ENCODE measurements at regions of chr14 and their contacts with region 1.

Region 1: GRCh38 chr14:32087173-32087861 is 10.2 kb downstream of the ARHGAP5 start:
- DNase-seq: no peak
- ATAC-seq: no peak
- H3K4me3 ChIP-seq: no peak overlapping the region
- H3K4me3 Mint-ChIP-seq: no peak overlapping the region
- H3K27ac ChIP-seq: no peak overlapping the region
- H3K27ac Mint-ChIP-seq: no peak overlapping the region
- H3K4me1 ChIP-seq: peaks cover 0 to 4% of the 10 kb centered on the region in 2 donors
- H3K4me1 Mint-ChIP-seq: peaks cover 9 to 65% (median 40%) of the 10 kb centered on the region in 7 donors
- H3K27me3 ChIP-seq: no peaks in the 10 kb centered on the region
- H3K27me3 Mint-ChIP-seq: no peaks in the 10 kb centered on the region

Region 2: GRCh38 chr14:31819304-31819703 is 268.0 kb before region 1 on chr14:
- CTCF ChIA-PET with region 1: no interaction called
- POLR2A ChIA-PET with region 1: no interaction called
- intact Hi-C with region 1: no loop called
- DNase-seq: no peak
- ATAC-seq: no peak
- H3K4me3 ChIP-seq: no peak overlapping the region
- H3K4me3 Mint-ChIP-seq: no peak overlapping the region
- H3K27ac ChIP-seq: no peak overlapping the region
- H3K27ac Mint-ChIP-seq: no peak overlapping the region
- H3K4me1 ChIP-seq: no peaks in the 10 kb centered on the region
- H3K4me1 Mint-ChIP-seq: no peaks in the 10 kb centered on the region
- H3K27me3 ChIP-seq: no peaks in the 10 kb centered on the region
- H3K27me3 Mint-ChIP-seq: no peaks in the 10 kb centered on the region

Region 3: DNA sequence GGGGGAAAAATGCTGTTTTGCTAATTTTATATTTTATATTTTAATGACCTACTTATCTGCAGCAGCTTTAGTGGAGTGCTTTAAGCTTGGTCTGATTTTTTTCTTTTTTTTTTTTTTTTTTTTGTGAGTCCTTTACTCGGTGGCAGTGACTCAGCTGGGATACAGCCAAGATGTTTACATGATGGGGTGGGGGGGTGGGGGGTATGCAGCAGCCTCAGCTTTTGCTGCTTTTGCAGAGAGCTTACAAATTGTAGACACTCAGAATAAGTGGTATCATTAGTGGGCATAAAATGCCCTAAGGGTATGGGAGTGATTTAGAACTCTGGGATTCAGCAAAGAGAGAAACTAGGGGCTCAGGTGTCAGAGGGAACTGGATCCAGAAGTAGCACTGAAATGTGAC is 48.4 kb before region 1 on chr14:
- CTCF ChIA-PET with region 1: no interaction called
- POLR2A ChIA-PET with region 1: no interaction called
- intact Hi-C with region 1: no loop called
- DNase-seq: no peak
- ATAC-seq: no peak
- H3K4me3 ChIP-seq: no peak overlapping the region
- H3K4me3 Mint-ChIP-seq: no peak overlapping the region
- H3K27ac ChIP-seq: no peak overlapping the region
- H3K27ac Mint-ChIP-seq: no peak overlapping the region
- H3K4me1 ChIP-seq: no peaks in the 10 kb centered on the region
- H3K4me1 Mint-ChIP-seq: peaks cover 0 to 5% (median 0%) of the 10 kb centered on the region in 7 donors
- H3K27me3 ChIP-seq: no peaks in the 10 kb centered on the region
- H3K27me3 Mint-ChIP-seq: peaks cover 5 to 19% (median 11%) of the 10 kb centered on the region in 5 donors

Region 4: DNA sequence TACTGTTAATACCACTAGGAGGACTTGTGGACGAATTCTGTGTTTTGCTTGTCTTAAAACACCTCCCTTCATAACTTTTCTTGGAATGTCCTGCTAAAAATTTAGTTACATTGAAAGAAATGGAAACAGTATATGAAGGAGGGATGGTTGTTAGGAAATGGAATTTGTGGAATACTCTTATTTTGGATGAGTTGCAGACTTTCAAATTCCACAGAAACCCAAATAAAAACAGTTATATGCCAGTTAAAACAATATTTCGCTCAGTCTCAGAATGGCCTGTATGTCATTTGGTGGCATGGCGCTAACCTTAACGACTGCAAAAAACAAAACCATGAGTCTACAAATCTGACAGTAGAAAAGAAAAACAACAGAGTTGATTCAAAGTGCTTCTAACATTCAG is 22.4 kb before region 1 on chr14:
- CTCF ChIA-PET with region 1: no interaction called
- POLR2A ChIA-PET with region 1: no interaction called
- intact Hi-C with region 1: no loop called
- DNase-seq: no peak
- ATAC-seq: no peak
- H3K4me3 ChIP-seq: no peak overlapping the region
- H3K4me3 Mint-ChIP-seq: no peak overlapping the region
- H3K27ac ChIP-seq: no peak overlapping the region
- H3K27ac Mint-ChIP-seq: no peak overlapping the region
- H3K4me1 ChIP-seq: no peaks in the 10 kb centered on the region
- H3K4me1 Mint-ChIP-seq: no peaks in the 10 kb centered on the region
- H3K27me3 ChIP-seq: no peaks in the 10 kb centered on the region
- H3K27me3 Mint-ChIP-seq: peaks cover 0 to 20% (median 5%) of the 10 kb centered on the region in 5 donors

Region 5: DNA sequence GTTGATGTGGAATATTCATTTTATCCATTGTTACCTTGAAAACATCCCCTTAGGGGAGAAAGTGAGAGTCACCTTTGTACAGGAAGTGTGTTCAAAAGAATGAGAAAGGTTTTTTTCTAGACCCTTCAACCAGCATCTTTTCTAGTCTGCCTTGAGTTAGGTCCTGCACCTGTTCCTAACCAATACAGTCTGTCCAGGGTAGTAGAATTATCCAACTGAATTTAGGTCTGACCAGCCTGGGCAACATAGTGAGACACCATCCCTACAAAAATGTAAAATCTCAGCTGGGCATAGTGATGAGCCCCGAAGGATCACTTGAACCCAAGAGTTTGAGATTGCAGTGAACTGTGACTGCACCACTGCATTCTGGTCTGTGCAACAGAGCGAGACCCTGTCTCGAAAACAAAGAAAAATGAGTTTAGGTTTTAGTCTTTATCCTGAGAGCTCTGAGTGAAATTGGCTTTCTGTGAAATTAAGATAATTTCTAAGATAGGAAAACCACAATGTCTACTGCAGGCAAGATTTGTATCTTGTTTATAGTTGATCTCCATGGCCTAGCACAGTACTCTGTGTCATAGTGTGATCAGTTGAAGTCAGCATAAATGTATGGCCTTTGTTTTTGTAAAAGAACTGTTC is 15.0 kb after region 1 on chr14:
- CTCF ChIA-PET with region 1: no interaction called
- POLR2A ChIA-PET with region 1: no interaction called
- intact Hi-C with region 1: loop called in 1 of 2 experiments (anchors 2 kb)
- DNase-seq: peak in 7 of 9 donors; percentile 9 to 57 (median 39)
- ATAC-seq: peak; percentile 91
- H3K4me3 ChIP-seq: no peak overlapping the region
- H3K4me3 Mint-ChIP-seq: peak overlapping the region; percentile 38 to 72 (median 62)
- H3K27ac ChIP-seq: peak overlapping the region; percentile 22
- H3K27ac Mint-ChIP-seq: peak overlapping the region; percentile 79 to 93 (median 89)
- H3K4me1 ChIP-seq: peaks cover 11 to 27% of the 10 kb centered on the region in 2 donors
- H3K4me1 Mint-ChIP-seq: peaks cover 18 to 74% (median 58%) of the 10 kb centered on the region in 7 donors
- H3K27me3 ChIP-seq: no peaks in the 10 kb centered on the region
- H3K27me3 Mint-ChIP-seq: no peaks in the 10 kb centered on the region